ENCODE measurements at regions of chr15 and their contacts with region 1.

Region 1: GRCh38 chr15:65268411-65268810 is 18.3 kb downstream of the PARP16 start:
- DNase-seq: no peak
- H3K4me3 ChIP-seq: no peak overlapping the region
- H3K27ac ChIP-seq: no peak overlapping the region
- H3K4me1 ChIP-seq: peaks cover 0 to 4% (median 0%) of the 10 kb centered on the region in 4 experiments
- H3K27me3 ChIP-seq: no peaks in the 10 kb centered on the region

Region 2: GRCh38 chr15:65184868-65185738 is 83.3 kb before region 1 on chr15 and contains the start of gene CLPX:
- CTCF ChIA-PET with region 1: interaction called, 80 read pairs
- POLR2A ChIA-PET with region 1: no interaction called
- DNase-seq: peak; percentile 95 to 98 (median 97)
- H3K4me3 ChIP-seq: peak within 1 kb of the TSS; percentile 83 to 96 (median 91)
- H3K27ac ChIP-seq: peak within 1 kb of the TSS; percentile 86 to 94
- H3K4me1 ChIP-seq: peaks cover 9 to 24% (median 19%) of the 10 kb centered on the region in 4 experiments
- H3K27me3 ChIP-seq: no peaks in the 10 kb centered on the region

Region 3: DNA sequence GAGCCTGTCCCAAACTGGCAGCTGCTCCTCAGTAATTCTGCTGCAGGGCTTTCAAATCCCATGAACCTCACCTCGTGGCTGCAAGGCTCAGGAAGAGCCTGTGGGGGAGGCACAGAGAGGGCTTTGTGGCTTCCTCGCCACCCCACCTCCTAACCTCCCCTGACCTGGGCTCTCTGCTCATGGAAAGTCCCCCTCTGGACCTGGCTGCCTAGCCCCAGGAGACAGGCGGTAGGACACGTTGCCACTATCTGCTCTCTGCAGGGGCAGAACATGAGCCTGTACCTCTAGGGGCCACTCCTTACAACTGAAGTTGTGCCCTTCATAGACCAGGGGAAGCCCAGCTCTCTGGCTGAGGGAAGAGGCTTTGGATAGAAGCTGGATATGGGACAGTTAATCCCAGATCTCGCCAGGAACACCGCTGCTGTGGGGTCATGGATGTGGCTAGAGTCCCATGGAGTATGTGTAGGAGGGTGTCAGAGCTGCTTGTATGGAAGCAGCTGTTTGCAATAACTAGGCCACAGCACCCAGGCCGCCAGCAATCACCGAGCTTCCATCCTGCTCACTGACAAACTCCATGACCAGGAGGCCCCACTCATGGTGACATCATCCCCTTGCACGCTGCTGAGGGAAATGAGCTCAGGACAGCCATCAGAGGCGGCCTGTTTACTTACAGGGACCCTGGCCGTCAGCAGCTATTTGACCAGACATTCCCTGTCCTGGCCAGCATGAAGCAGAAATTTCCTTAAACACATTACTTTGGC is 23.1 kb before region 1 on chr15:
- CTCF ChIA-PET with region 1: interaction called, 19 read pairs
- POLR2A ChIA-PET with region 1: no interaction called
- DNase-seq: no peak
- H3K4me3 ChIP-seq: no peak overlapping the region
- H3K27ac ChIP-seq: no peak overlapping the region
- H3K4me1 ChIP-seq: peaks cover 0 to 6% (median 4%) of the 10 kb centered on the region in 4 experiments
- H3K27me3 ChIP-seq: no peaks in the 10 kb centered on the region

Region 4: DNA sequence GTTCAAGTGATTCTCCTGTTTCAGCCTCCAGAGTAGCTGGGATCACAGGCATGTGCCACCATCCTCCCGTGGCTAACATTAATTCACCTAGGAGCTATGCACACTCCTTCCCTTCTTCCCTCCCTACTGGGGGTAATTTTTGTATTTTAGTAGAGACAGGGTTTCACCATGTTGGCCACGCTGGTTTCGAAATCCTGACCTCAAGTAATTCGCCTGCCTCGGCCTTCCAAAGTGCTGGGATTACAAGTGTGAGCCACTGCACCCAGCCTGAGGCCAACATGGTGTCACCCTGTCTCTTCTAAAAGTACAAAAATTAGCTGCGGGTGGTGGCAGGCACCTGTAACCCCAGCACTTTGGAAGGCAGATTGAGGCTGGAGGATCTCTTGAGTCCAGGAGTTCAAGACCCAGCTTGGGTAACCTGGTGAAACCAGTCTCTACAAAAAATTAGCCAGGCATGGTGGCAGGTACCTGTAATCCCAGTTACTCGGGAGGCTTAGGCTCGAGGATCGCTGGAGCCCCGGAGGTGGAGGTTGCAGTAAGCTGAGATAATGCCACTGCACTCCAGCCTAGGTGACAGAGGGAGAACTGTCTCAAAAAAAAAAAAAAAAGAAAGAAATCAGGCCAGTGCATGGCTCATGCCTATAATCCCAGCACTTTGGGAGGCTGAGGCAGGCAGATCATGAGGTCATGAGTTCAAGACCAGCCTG is 42.2 kb after region 1 on chr15:
- CTCF ChIA-PET with region 1: no interaction called
- POLR2A ChIA-PET with region 1: no interaction called
- DNase-seq: no peak
- H3K4me3 ChIP-seq: no peak overlapping the region
- H3K27ac ChIP-seq: no peak overlapping the region
- H3K4me1 ChIP-seq: peaks cover 0 to 9% (median 4%) of the 10 kb centered on the region in 4 experiments
- H3K27me3 ChIP-seq: no peaks in the 10 kb centered on the region